ENCODE measurements at regions of chr5 and their contacts with region 1.

Region 1: GRCh38 chr5:172714491-172715421 is 56.2 kb downstream of the DUSP1 start:
- DNase-seq: peak; percentile 61
- ATAC-seq: peak; percentile 74
- H3K4me3 ChIP-seq: no peak overlapping the region
- H3K27ac ChIP-seq: peak overlapping the region; percentile 2; the same call in 1 of the 2 replicates
- H3K4me1 ChIP-seq: peaks cover 6% of the 10 kb centered on the region
- H3K27me3 ChIP-seq: no peaks in the 10 kb centered on the region
- CTCF ChIP-seq: peak; percentile 69
- POLR2A ChIP-seq: no peak
- RAD21 ChIP-seq: peak; percentile 64

Region 2: GRCh38 chr5:172764849-172765765 is 50.4 kb after region 1 on chr5:
- CTCF ChIA-PET with region 1: interaction called, 9 read pairs
- POLR2A ChIA-PET with region 1: interaction called, 13 read pairs
- dilution Hi-C with region 1: no loop called
- in situ Hi-C with region 1: loop called (anchors 5 kb)
- intact Hi-C with region 1: loop called (anchors 1 kb)
- DNase-seq: peak; percentile 99
- ATAC-seq: peak; percentile 51
- H3K4me3 ChIP-seq: peak overlapping the region; percentile 12
- H3K27ac ChIP-seq: peak overlapping the region; percentile 54
- H3K4me1 ChIP-seq: peaks cover 3% of the 10 kb centered on the region
- H3K27me3 ChIP-seq: no peaks in the 10 kb centered on the region
- CTCF ChIP-seq: no peak
- POLR2A ChIP-seq: no peak
- RAD21 ChIP-seq: no peak

Region 3: GRCh38 chr5:172902497-172903200 is 187.9 kb after region 1 on chr5:
- CTCF ChIA-PET with region 1: interaction called, 5 read pairs
- POLR2A ChIA-PET with region 1: no interaction called
- dilution Hi-C with region 1: no loop called
- in situ Hi-C with region 1: no loop called
- intact Hi-C with region 1: loop called (anchors 10 kb)
- DNase-seq: peak; percentile 99
- ATAC-seq: peak; percentile 74
- H3K4me3 ChIP-seq: no peak overlapping the region
- H3K27ac ChIP-seq: peak overlapping the region; percentile 97
- H3K4me1 ChIP-seq: peaks cover 57% of the 10 kb centered on the region
- H3K27me3 ChIP-seq: no peaks in the 10 kb centered on the region
- CTCF ChIP-seq: peak; percentile 64
- POLR2A ChIP-seq: no peak; the same call in 1 of the 2 replicates
- RAD21 ChIP-seq: peak; percentile 54

Region 4: DNA sequence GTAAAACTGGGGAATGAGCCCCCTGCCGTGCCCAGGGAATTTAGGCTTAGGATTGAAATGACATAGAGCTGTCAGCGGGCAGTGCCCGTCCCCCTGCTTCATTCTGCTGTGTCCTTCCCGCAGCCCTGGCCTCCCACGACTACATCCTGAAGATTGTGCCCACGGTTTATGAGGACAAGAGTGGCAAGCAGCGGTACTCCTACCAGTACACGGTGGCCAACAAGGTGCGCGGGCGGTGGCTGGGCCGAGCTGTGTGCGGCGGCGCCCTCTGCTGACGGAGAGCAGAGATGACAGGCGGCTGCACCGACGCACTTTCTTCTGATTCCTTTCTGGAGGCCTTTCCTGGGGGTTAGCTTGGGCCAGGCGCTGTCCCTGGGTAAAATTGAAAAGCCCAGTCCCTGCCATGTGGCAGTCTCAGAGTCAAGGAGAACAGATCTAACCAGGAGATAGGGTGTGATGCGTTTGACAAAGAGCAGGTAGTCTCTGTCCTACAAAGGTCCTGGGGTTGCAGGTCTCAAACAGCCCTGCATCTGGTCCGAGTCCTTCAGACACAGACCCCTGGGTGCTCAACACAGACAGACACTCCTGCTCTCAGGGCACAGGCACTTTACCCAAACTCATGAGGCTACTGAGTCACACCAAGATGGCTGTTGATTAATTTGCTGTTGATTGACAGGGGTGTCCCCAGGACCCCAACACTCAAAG is 217.7 kb after region 1 on chr5:
- CTCF ChIA-PET with region 1: interaction called, 25 read pairs
- POLR2A ChIA-PET with region 1: no interaction called
- dilution Hi-C with region 1: no loop called
- in situ Hi-C with region 1: loop called (anchors 5 kb)
- intact Hi-C with region 1: loop called (anchors 1 kb)
- DNase-seq: peak; percentile 78
- ATAC-seq: peak; percentile 64
- H3K4me3 ChIP-seq: no peak overlapping the region
- H3K27ac ChIP-seq: peak overlapping the region; percentile 73
- H3K4me1 ChIP-seq: peaks cover 22% of the 10 kb centered on the region
- H3K27me3 ChIP-seq: no peaks in the 10 kb centered on the region
- CTCF ChIP-seq: peak; percentile 96
- POLR2A ChIP-seq: peak; percentile 78
- RAD21 ChIP-seq: peak; percentile 98

Region 5: DNA sequence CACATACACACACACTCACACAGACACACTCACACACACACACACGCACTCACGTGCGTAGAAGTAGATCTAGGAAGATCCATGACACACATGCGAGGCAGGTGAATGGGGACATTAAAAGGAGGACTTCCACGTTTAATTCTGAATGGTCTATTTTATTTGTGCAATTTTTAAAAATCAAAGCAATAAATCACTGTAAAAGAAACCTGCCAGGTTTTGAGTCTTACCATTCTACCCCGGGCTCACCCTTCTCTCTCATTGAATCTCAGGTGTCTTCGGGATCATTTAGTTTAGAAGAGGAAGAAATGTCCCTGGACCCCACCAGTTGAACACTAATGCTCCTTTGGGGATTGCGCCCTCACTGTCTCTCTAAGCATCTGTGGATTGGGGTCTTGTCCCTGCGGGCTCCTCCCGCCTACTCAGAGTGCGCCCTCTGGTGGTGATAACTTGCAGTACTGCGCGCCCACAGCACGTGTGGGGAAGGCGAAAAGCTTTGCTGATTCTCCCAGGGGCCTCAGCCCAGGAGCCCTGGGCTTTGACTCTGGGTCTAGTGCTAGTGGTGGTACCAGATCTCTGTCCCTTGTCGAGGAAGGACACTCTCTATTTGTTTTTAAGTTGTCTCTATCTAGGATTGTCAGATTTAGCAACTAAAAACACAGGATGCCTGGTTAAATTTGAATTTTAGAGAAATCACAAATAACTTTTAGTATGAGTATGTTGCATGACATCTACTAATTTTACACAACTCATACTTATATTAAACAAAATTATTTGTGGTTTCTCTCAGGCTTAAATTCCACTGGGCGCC is 866.9 kb after region 1 on chr5:
- CTCF ChIA-PET with region 1: no interaction called
- POLR2A ChIA-PET with region 1: no interaction called
- dilution Hi-C with region 1: no loop called
- in situ Hi-C with region 1: loop called (anchors 25 kb)
- intact Hi-C with region 1: no loop called
- DNase-seq: peak; percentile 27
- ATAC-seq: peak; percentile 60
- H3K4me3 ChIP-seq: no peak overlapping the region
- H3K27ac ChIP-seq: peak overlapping the region; percentile 55; the same call in 1 of the 2 replicates
- H3K4me1 ChIP-seq: peaks cover 11% of the 10 kb centered on the region; the same call in 1 of the 2 replicates
- H3K27me3 ChIP-seq: no peaks in the 10 kb centered on the region
- CTCF ChIP-seq: peak; percentile 67
- POLR2A ChIP-seq: no peak
- RAD21 ChIP-seq: peak; percentile 58